ENCODE measurements at regions of chr1 and their contacts with region 1.

Region 1: GRCh38 chr1:3403388-3404231 is 50.9 kb upstream of the ARHGEF16 start:
- DNase-seq: no peak
- H3K4me3 ChIP-seq: no peak overlapping the region
- H3K27ac ChIP-seq: no peak overlapping the region
- H3K4me1 ChIP-seq: no peaks in the 10 kb centered on the region
- H3K27me3 ChIP-seq: no peaks in the 10 kb centered on the region
- CTCF ChIP-seq: no peak

Region 2: GRCh38 chr1:3060601-3061551 is 342.7 kb before region 1 on chr1:
- intact Hi-C with region 1: loop called (anchors 5 kb)
- DNase-seq: no peak
- H3K4me3 ChIP-seq: no peak overlapping the region
- H3K27ac ChIP-seq: no peak overlapping the region
- H3K4me1 ChIP-seq: no peaks in the 10 kb centered on the region
- H3K27me3 ChIP-seq: peaks cover 47% of the 10 kb centered on the region
- CTCF ChIP-seq: no peak

Region 3: GRCh38 chr1:3577300-3577699 is 173.7 kb after region 1 on chr1:
- intact Hi-C with region 1: no loop called
- DNase-seq: no peak
- H3K4me3 ChIP-seq: no peak overlapping the region
- H3K27ac ChIP-seq: no peak overlapping the region
- H3K4me1 ChIP-seq: no peaks in the 10 kb centered on the region
- H3K27me3 ChIP-seq: no peaks in the 10 kb centered on the region
- CTCF ChIP-seq: no peak